AG04450 (cell line): ENCODE measurements at regions of chr1 and their contacts with region 1.

Region 1: DNA sequence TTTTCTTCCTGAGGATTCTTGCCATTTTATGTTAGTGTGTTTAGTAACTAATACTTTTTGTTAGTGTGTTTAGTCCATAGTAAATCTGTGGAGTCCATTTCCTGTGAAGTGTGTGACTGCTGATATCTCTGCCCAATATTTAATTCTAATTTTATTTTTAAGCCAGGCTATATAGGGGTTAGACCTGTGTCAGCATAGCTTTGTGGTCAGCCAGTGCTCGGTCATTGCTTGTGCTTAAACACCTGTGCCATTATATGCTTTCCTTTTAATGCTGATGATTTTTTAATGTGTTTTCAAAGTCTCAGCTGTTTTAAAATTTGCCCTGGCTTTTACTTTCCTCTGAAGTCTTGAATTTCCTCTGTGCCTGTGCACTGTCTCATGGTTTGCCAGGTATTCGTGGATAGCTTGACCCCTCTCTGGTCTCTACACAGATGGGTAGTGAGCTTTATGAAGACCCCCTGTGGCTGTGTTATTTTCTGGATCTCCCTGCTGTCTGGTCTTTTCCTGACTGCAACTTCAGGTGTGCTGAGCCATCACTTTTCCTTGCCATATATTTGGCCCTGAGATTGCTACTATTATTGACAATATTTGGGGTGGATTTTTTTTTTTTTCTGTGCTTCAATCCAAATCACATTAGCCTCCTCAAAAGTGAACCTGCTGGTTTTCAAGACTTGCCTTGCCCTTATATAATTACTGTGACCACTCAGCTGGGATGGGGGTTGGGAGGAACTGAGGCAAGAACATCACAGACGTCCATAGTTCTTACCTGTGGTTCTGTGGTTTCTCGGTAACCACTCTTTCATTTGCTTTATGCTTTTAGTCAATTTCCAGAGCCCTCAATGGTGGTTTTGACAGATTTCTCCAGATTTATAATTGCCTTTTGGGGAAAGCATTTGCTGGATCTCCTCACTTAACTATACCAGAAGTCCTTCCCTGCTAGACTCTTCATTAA is 59.6 kb downstream of the RPS6KC1 start:
- DNase-seq: no peak
- H3K4me3 ChIP-seq: no peak overlapping the region
- H3K27ac ChIP-seq: no peak overlapping the region
- H3K27me3 ChIP-seq: no peaks in the 10 kb centered on the region
- CTCF ChIP-seq: no peak

Region 2: DNA sequence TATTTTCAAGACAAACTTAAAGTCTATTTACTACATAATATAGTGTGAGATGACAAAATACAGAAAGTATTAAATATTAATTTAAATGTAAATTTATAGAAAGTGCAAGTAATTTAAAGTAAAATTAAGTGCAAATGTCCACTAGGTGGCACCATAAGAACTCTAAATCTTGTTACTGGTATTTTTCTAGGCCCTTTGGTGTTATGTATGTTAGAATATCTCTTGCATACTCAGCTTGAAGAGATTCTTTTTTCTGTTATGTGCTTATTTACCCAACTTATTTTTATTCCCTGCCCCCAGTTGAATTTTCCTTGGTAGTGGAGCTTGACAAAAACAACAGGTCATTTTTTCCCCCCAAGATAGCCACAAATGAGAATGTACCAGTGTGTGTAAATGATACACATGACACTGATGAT is 11.9 kb after region 1 on chr1:
- CTCF ChIA-PET with region 1: interaction called, 10 read pairs
- POLR2A ChIA-PET with region 1: no interaction called
- DNase-seq: peak; percentile 24
- H3K4me3 ChIP-seq: no peak overlapping the region
- H3K27ac ChIP-seq: no peak overlapping the region
- H3K27me3 ChIP-seq: no peaks in the 10 kb centered on the region
- CTCF ChIP-seq: peak; percentile 51